Endothelial cell of umbilical vein (primary cell): ENCODE measurements at regions of chr16 and their contacts with region 1.

Region 1: GRCh38 chr16:15961060-15961511 is 11.7 kb downstream of the ABCC1 start:
- DNase-seq: peak; percentile 77
- H3K4me3 ChIP-seq: no peak overlapping the region
- H3K27ac ChIP-seq: peak overlapping the region; percentile 43
- H3K4me1 ChIP-seq: peaks cover 49% of the 10 kb centered on the region
- H3K27me3 ChIP-seq: no peaks in the 10 kb centered on the region
- CTCF ChIP-seq: no peak
- POLR2A ChIP-seq: no peak

Region 2: DNA sequence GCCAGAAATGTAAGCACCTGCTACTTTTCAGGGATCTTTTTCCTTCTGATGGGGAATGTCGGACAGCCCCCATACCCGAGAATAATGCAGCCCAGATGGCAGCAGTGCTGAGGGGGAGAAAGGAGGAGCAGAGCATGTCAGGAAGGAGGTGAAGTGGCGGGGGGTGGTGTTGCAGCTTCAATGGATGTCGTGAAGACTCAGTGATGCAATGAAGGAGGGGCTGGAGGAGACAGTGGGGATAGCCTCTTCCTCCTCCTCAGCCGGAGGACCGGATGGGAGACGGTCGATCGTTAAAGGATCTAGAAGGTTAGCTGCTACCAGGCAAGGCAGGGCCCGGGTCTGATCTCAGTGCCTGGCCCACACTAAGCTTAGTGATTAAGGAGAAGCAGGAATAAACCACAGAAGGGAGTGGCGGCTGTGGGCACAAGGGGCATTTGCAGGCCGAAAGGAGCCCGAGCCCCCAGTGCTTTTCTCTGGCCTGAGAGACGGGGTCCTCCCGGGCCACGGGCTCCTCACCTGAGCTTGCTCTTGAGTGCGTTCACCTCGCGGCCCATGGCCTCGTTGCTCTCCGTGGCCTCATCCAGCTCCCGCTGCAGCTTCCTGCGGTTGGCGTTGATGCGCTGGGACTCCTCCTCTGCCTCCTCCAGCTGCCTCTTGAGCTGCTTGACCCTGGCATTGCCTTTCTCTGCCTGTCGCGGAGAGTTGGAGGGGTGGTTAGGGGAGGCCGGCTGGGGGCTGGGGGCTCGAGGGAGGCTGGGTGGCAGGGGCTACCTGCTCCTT is 246.5 kb before region 1 on chr16:
- CTCF ChIA-PET with region 1: no interaction called
- POLR2A ChIA-PET with region 1: no interaction called
- dilution Hi-C with region 1: no loop called
- intact Hi-C with region 1: no loop called
- DNase-seq: no peak
- H3K4me3 ChIP-seq: no peak overlapping the region
- H3K27ac ChIP-seq: no peak overlapping the region
- H3K4me1 ChIP-seq: no peaks in the 10 kb centered on the region
- H3K27me3 ChIP-seq: no peaks in the 10 kb centered on the region
- CTCF ChIP-seq: no peak
- POLR2A ChIP-seq: no peak

Region 3: GRCh38 chr16:16021988-16022682 is 61.0 kb after region 1 on chr16:
- CTCF ChIA-PET with region 1: no interaction called
- POLR2A ChIA-PET with region 1: interaction called, 13 read pairs
- dilution Hi-C with region 1: no loop called
- intact Hi-C with region 1: no loop called
- DNase-seq: peak; percentile 96
- H3K4me3 ChIP-seq: no peak overlapping the region
- H3K27ac ChIP-seq: peak overlapping the region; percentile 91
- H3K4me1 ChIP-seq: peaks cover 35% of the 10 kb centered on the region
- H3K27me3 ChIP-seq: no peaks in the 10 kb centered on the region
- CTCF ChIP-seq: no peak
- POLR2A ChIP-seq: peak; percentile 33